ENCODE measurements at regions of chr1 and their contacts with region 1.

Region 1: DNA sequence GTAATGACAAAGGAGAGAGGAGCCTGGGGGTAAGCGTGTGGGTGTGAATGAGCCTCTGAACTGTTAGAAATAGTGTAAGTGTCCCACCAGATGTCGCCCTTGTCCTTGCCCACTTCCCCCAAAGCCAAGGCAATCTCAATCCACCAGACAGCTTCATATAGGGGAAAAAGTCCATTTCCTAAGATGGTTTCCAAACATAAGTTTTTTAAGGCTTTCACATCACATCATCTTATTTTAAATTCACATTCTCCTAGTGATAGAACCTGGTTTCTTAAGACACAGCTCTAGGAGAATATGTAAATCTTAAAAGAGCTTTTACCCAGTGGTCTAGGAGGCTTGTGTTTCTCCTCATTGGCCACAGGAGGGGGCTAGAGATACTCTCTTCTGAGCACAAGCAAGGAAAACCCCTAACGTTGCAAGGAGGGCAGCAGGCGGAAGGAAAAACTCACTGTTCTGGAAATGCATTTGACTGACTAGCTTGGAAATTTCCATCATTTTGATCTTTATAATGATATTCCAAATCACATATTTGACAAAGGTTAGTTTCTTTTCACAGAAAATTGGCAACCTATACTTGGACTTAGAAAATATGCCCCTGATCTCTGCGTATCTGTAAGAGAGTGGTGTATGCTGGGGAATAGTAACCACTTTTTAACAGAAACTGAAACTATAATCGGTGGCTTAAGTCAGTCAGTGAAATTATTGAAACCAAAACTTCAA is 51.9 kb upstream of the LPAR3 start:
- DNase-seq: peak; percentile 20 to 94 (median 90)
- ATAC-seq: peak; percentile 98
- H3K4me3 ChIP-seq: peak overlapping the region; percentile 63
- H3K4me3 Mint-ChIP-seq: peak overlapping the region; percentile 72 to 93 (median 86)
- H3K27ac ChIP-seq: peak overlapping the region; percentile 89
- H3K27ac Mint-ChIP-seq: peak overlapping the region; percentile 87 to 98 (median 96)
- H3K4me1 ChIP-seq: peaks cover 5 to 9% of the 10 kb centered on the region in 2 donors
- H3K4me1 Mint-ChIP-seq: peaks cover 7 to 25% (median 12%) of the 10 kb centered on the region in 7 donors
- H3K27me3 ChIP-seq: no peaks in the 10 kb centered on the region
- H3K27me3 Mint-ChIP-seq: peaks cover 0 to 5% (median 0%) of the 10 kb centered on the region in 5 donors

Region 2: DNA sequence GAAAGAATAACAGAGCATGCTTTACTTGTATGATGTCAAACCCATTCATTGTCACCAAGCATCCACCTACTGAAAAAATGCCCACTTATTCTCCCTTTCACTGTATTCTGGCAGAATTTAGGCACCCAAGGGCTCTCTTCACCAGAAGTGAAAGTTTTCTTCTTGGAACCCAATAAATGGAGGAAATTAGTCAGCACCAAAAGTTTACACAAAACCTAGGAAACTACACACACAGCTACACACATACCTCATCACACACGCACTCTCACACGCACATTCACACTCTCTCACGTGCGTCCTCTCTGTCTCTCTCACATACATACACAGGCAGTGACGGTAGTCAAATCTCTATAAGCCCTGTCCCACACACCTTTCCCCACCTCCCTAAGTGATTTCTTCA is 14.4 kb after region 1 on chr1:
- CTCF ChIA-PET with region 1: interaction called, 19 read pairs
- POLR2A ChIA-PET with region 1: no interaction called
- intact Hi-C with region 1: loop called in 1 of 2 experiments (anchors 1 kb)
- DNase-seq: peak in 1 of 9 donors; percentile 42
- ATAC-seq: peak; percentile 46
- H3K4me3 ChIP-seq: no peak overlapping the region
- H3K4me3 Mint-ChIP-seq: peak overlapping the region in 1 of 10 donors; percentile 12
- H3K27ac ChIP-seq: no peak overlapping the region
- H3K27ac Mint-ChIP-seq: peak overlapping the region in 2 of 9 donors; percentile 10 to 23
- H3K4me1 ChIP-seq: no peaks in the 10 kb centered on the region
- H3K4me1 Mint-ChIP-seq: peaks cover 0 to 10% (median 0%) of the 10 kb centered on the region in 7 donors
- H3K27me3 ChIP-seq: no peaks in the 10 kb centered on the region
- H3K27me3 Mint-ChIP-seq: peaks cover 0 to 6% (median 3%) of the 10 kb centered on the region in 5 donors

Region 3: GRCh38 chr1:85027242-85027983 is 82.5 kb after region 1 on chr1:
- CTCF ChIA-PET with region 1: interaction called, 105 read pairs
- POLR2A ChIA-PET with region 1: interaction called, 34 read pairs
- intact Hi-C with region 1: loop called (anchors 1 kb)
- DNase-seq: peak in 7 of 9 donors; percentile 12 to 56 (median 34)
- ATAC-seq: peak; percentile 94
- H3K4me3 ChIP-seq: peak overlapping the region; percentile 33
- H3K4me3 Mint-ChIP-seq: peak overlapping the region in 9 of 10 donors; percentile 19 to 70 (median 49)
- H3K27ac ChIP-seq: peak overlapping the region; percentile 5
- H3K27ac Mint-ChIP-seq: peak overlapping the region; percentile 43 to 91 (median 84)
- H3K4me1 ChIP-seq: peaks cover 0 to 7% of the 10 kb centered on the region in 2 donors
- H3K4me1 Mint-ChIP-seq: peaks cover 7 to 13% (median 10%) of the 10 kb centered on the region in 7 donors
- H3K27me3 ChIP-seq: no peaks in the 10 kb centered on the region
- H3K27me3 Mint-ChIP-seq: no peaks in the 10 kb centered on the region

Region 4: DNA sequence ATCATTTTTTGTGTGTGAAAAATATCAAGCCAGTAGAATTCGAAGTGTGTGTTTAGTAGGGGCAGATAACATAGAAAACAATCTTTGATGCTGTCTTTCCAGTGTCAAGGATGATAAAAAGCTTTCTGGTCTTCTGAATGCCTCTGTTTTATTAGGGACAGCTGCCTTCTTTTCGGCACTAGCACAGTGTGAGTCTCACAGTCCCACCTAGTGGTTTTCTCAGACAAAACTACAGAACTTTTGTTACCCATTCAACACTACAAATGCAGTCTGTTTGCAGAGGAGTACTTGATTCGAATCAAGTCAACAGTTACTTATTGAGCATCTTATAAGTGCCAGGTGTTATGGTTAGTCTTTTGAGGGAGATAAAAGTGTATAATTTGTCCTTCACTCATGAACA is 134.0 kb after region 1 on chr1:
- CTCF ChIA-PET with region 1: no interaction called
- POLR2A ChIA-PET with region 1: interaction called, 3 read pairs
- intact Hi-C with region 1: loop called (anchors 1 kb)
- DNase-seq: no peak
- ATAC-seq: no peak
- H3K4me3 ChIP-seq: no peak overlapping the region
- H3K4me3 Mint-ChIP-seq: no peak overlapping the region
- H3K27ac ChIP-seq: no peak overlapping the region
- H3K27ac Mint-ChIP-seq: no peak overlapping the region
- H3K4me1 ChIP-seq: no peaks in the 10 kb centered on the region
- H3K4me1 Mint-ChIP-seq: peaks cover 0 to 6% (median 4%) of the 10 kb centered on the region in 7 donors
- H3K27me3 ChIP-seq: no peaks in the 10 kb centered on the region
- H3K27me3 Mint-ChIP-seq: peaks cover 5 to 49% (median 15%) of the 10 kb centered on the region in 5 donors

Region 5: DNA sequence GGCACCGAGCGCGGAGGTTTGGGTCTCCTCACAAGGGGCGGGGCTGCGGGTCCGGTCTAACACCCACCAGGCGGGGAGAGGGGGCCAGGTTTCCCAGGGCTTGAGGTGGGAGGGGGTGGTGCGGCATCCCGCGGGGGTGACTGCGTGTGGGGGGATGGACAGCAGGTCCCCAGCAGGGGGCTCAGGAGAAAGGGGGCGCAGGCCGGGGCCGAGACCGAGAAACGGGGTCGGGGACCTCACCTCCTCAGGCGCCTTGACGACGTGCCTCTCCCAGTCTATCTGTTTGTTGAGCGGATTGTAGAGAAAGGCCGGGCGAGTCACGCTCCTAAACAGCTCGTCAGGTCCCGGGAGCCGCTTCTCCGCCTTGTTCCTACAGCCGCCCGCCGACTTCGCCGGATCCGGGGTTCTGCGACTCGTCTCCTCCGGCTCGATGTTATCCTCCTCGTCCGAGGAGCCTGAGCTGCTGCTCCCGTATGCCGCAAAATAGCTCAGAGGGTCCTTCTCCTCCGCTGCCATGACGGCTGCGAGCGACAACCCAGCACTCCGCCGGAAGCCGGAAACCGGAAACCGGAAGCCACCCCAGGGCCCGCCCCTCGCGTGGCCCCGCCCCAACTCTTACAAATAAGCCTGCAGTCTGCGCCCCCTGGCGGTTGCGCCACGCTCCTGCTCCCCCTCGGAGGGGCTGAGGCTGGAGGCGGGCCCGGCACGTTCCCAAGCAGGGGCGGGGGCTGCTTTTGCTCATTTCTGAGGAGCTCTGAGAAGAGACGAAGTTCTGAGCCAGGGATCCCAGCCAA is 314.4 kb after region 1 on chr1 and contains the start of gene C1orf52:
- CTCF ChIA-PET with region 1: interaction called, 163 read pairs
- POLR2A ChIA-PET with region 1: interaction called, 34 read pairs
- intact Hi-C with region 1: loop called (anchors 1 kb)
- DNase-seq: peak; percentile 92 to 99 (median 96)
- ATAC-seq: peak; percentile 99
- H3K4me3 ChIP-seq: peak within 1 kb of the TSS; percentile 83
- H3K4me3 Mint-ChIP-seq: peak within 1 kb of the TSS; percentile 93 to 99 (median 98)
- H3K27ac ChIP-seq: peak within 1 kb of the TSS; percentile 90
- H3K27ac Mint-ChIP-seq: peak within 1 kb of the TSS; percentile 91 to 98 (median 96)
- H3K4me1 ChIP-seq: peaks cover 14 to 16% of the 10 kb centered on the region in 2 donors
- H3K4me1 Mint-ChIP-seq: peaks cover 19 to 52% (median 45%) of the 10 kb centered on the region in 7 donors
- H3K27me3 ChIP-seq: no peaks in the 10 kb centered on the region
- H3K27me3 Mint-ChIP-seq: no peaks in the 10 kb centered on the region
- total RNA-seq, gene C1orf52: 25.7 to 55.4 (median 46.1) TPM

Region 6: GRCh38 chr1:85638412-85638811 is 693.5 kb after region 1 on chr1:
- CTCF ChIA-PET with region 1: no interaction called
- POLR2A ChIA-PET with region 1: no interaction called
- intact Hi-C with region 1: no loop called
- DNase-seq: no peak
- ATAC-seq: no peak
- H3K4me3 ChIP-seq: no peak overlapping the region
- H3K4me3 Mint-ChIP-seq: no peak overlapping the region
- H3K27ac ChIP-seq: no peak overlapping the region
- H3K27ac Mint-ChIP-seq: no peak overlapping the region
- H3K4me1 ChIP-seq: no peaks in the 10 kb centered on the region
- H3K4me1 Mint-ChIP-seq: peaks cover 0 to 4% (median 0%) of the 10 kb centered on the region in 7 donors
- H3K27me3 ChIP-seq: no peaks in the 10 kb centered on the region
- H3K27me3 Mint-ChIP-seq: no peaks in the 10 kb centered on the region

Region 7: DNA sequence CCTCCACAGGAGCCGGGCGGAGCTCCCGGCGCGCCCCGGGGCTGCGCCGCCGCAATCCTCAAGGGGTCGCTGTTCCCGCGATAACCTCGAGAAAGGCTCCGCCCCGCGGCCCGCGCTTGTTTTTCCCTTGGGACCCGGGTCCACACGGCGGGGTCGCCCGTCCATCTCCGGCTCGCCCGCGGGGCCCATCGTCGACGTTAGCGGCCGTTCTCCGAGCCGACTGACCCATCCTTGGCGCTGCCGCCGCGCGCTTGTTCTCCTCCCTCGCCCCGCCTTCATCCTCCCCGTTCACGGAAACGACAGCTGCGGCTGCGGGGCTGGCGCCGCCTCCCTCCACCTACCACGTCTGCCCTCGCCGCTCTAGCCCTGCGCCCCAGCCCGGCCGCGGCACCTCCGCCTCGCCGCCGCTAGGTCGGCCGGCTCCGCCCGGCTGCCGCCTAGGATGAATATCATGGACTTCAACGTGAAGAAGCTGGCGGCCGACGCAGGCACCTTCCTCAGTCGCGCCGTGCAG is 1759.6 kb after region 1 on chr1 and contains the start of gene SH3GLB1:
- CTCF ChIA-PET with region 1: no interaction called
- POLR2A ChIA-PET with region 1: no interaction called
- intact Hi-C with region 1: loop called in 1 of 2 experiments (anchors 10 kb)
- DNase-seq: peak; percentile 83 to 93 (median 92)
- ATAC-seq: peak; percentile 93
- H3K4me3 ChIP-seq: peak within 1 kb of the TSS; percentile 83
- H3K4me3 Mint-ChIP-seq: peak within 1 kb of the TSS; percentile 95 to 99 (median 97)
- H3K27ac ChIP-seq: peak within 1 kb of the TSS; percentile 86
- H3K27ac Mint-ChIP-seq: peak within 1 kb of the TSS; percentile 96 to 99 (median 97)
- H3K4me1 ChIP-seq: peaks cover 16 to 17% of the 10 kb centered on the region in 2 donors
- H3K4me1 Mint-ChIP-seq: peaks cover 34 to 67% (median 56%) of the 10 kb centered on the region in 7 donors
- H3K27me3 ChIP-seq: no peaks in the 10 kb centered on the region
- H3K27me3 Mint-ChIP-seq: no peaks in the 10 kb centered on the region
- total RNA-seq, gene SH3GLB1: 36.7 to 72.0 (median 49.8) TPM

Measured in naive thymus-derived CD4-positive, alpha-beta T cell (primary cell).